Activated naive CD4-positive, alpha-beta T cell treated with anti-CD3 and anti-CD28 coated beads, Interleukin-2, amount 10 ng/mL, durations not matched to agents 7 days and 5 days (primary cell): ENCODE measurements at regions of chr1 and their contacts with region 1.

Region 1: GRCh38 chr1:226424228-226425003 is 16.5 kb upstream of the PARP1 start:
- DNase-seq: no peak
- H3K4me3 Mint-ChIP-seq: no peak overlapping the region
- H3K27ac Mint-ChIP-seq: no peak overlapping the region
- H3K4me1 Mint-ChIP-seq: peaks cover 25% of the 10 kb centered on the region
- H3K27me3 Mint-ChIP-seq: peaks cover 35% of the 10 kb centered on the region

Region 2: GRCh38 chr1:226349801-226350518 is 74.5 kb before region 1 on chr1:
- CTCF ChIA-PET with region 1: no interaction called
- DNase-seq: no peak
- H3K4me3 Mint-ChIP-seq: no peak overlapping the region
- H3K27ac Mint-ChIP-seq: no peak overlapping the region
- H3K4me1 Mint-ChIP-seq: no peaks in the 10 kb centered on the region
- H3K27me3 Mint-ChIP-seq: peaks cover 8% of the 10 kb centered on the region

Region 3: DNA sequence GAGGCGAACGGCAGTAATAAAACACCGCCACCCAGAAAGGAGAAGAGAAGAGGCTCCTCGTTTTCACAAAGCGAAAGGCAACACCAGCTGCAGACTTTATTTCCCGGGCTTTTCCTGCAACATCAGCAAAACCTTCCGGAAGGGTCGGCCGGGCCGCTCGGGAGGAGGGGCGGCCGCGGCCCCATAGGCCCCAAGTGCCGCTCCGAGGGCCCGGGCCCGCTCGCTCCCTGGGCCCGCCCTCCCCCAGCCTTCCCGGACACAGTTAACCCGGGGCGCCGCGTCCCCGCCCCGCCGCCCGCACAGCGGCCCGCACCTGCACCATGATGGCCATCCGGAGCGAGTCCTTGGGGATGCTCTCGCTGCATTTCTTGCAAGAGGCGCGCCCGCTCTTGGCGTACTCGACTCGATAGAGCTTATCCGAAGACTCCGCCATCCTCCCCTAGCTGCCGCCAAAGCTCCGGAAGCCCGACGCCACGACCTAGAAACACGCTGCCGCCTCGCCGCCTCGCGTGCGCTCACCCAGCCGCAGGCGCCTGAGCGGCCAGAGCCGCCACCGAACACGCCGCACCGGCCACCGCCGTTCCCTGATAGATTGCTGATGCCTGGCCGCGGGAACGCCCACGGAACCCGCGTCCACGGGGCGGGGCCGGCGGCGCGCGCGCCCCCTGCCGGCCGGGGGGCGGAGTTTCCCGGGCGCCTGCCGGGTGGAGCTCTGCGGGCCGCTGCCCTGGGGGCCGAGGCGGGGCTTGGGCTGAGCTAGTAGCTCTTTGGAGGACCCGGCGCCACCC is 16.7 kb before region 1 on chr1 and contains the start of gene PARP1:
- CTCF ChIA-PET with region 1: interaction called, 17 read pairs
- DNase-seq: peak; percentile 91
- H3K4me3 Mint-ChIP-seq: peak within 1 kb of the TSS; percentile 97
- H3K27ac Mint-ChIP-seq: peak within 1 kb of the TSS; percentile 97
- H3K4me1 Mint-ChIP-seq: peaks cover 40% of the 10 kb centered on the region
- H3K27me3 Mint-ChIP-seq: peaks cover 10% of the 10 kb centered on the region

Region 4: DNA sequence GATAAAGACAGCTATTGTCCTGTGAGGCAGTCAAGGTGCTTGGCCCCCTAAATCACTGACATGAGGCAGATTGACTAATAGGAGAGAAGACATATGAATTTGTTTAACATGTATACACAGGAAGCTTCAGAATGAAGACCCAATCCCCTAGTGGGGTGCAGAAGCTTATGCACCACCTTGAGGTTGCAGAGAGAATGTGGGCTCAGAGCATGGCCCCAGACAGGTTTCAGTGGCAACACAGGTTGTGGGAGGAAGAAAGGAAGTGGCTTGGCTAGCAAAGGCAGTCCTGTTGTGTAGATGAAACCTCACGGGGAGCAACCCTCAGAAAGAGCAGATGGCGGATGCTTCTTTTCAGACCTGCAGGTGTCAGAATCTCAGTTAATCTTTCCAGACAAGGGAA is 20.5 kb after region 1 on chr1:
- CTCF ChIA-PET with region 1: interaction called, 20 read pairs
- DNase-seq: peak; percentile 87
- H3K4me3 Mint-ChIP-seq: no peak overlapping the region
- H3K27ac Mint-ChIP-seq: peak overlapping the region; percentile 79
- H3K4me1 Mint-ChIP-seq: peaks cover 32% of the 10 kb centered on the region
- H3K27me3 Mint-ChIP-seq: peaks cover 34% of the 10 kb centered on the region

Region 5: DNA sequence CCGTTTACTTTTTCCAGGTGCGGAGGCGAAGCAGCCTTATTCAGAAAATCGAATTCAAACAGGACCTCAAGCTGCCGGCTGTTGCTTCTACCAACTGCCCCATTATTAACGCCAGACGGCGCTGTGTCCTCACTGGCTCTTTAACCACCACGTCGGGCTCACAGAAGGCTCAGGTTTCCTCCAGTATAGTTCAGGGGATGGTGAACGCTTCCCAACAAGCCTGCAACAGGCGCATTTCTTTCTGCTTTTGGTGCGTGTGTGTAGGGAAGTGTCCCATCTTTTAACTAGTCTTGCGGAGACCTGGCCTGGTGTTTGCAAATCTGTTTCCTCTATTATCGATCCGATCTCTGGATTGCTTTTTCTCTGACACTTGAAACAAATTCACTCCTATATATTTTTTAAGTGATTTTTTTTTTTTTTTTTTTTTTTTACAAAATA is 123.4 kb after region 1 on chr1:
- CTCF ChIA-PET with region 1: interaction called, 11 read pairs
- DNase-seq: peak; percentile 71
- H3K4me3 Mint-ChIP-seq: no peak overlapping the region
- H3K27ac Mint-ChIP-seq: no peak overlapping the region
- H3K4me1 Mint-ChIP-seq: peaks cover 14% of the 10 kb centered on the region
- H3K27me3 Mint-ChIP-seq: peaks cover 79% of the 10 kb centered on the region

Region 6: GRCh38 chr1:226608699-226609505 is 184.5 kb after region 1 on chr1:
- CTCF ChIA-PET with region 1: interaction called, 11 read pairs
- DNase-seq: peak; percentile 80
- H3K4me3 Mint-ChIP-seq: no peak overlapping the region
- H3K27ac Mint-ChIP-seq: no peak overlapping the region
- H3K4me1 Mint-ChIP-seq: no peaks in the 10 kb centered on the region
- H3K27me3 Mint-ChIP-seq: peaks cover 28% of the 10 kb centered on the region